Endothelial cell of umbilical vein (primary cell): ENCODE measurements at regions of chr18 and their contacts with region 1.

Region 1: GRCh38 chr18:56650944-56651770 is at the start of gene WDR7:
- DNase-seq: peak; percentile 98
- H3K4me3 ChIP-seq: peak within 1 kb of the TSS; percentile 46 to 73 (median 62)
- H3K27ac ChIP-seq: peak within 1 kb of the TSS; percentile 36
- H3K4me1 ChIP-seq: peaks cover 9% of the 10 kb centered on the region
- H3K27me3 ChIP-seq: no peaks in the 10 kb centered on the region
- CTCF ChIP-seq: no peak
- POLR2A ChIP-seq: no peak
- total RNA-seq, gene WDR7: 19.0 and 19.2 TPM in 2 replicates

Region 2: GRCh38 chr18:56638271-56639093 is 12.7 kb before region 1 on chr18 and contains the start of gene TXNL1:
- CTCF ChIA-PET with region 1: interaction called, 9 read pairs
- POLR2A ChIA-PET with region 1: interaction called, 3 read pairs
- dilution Hi-C with region 1: no loop called
- intact Hi-C with region 1: loop called (anchors 1 kb)
- DNase-seq: peak; percentile 99
- H3K4me3 ChIP-seq: peak within 1 kb of the TSS; percentile 89 to 92 (median 91)
- H3K27ac ChIP-seq: peak within 1 kb of the TSS; percentile 97
- H3K4me1 ChIP-seq: peaks cover 27% of the 10 kb centered on the region
- H3K27me3 ChIP-seq: no peaks in the 10 kb centered on the region
- CTCF ChIP-seq: no peak
- POLR2A ChIP-seq: peak; percentile 93
- total RNA-seq, gene TXNL1: 70.6 and 81.2 TPM in 2 replicates

Region 3: DNA sequence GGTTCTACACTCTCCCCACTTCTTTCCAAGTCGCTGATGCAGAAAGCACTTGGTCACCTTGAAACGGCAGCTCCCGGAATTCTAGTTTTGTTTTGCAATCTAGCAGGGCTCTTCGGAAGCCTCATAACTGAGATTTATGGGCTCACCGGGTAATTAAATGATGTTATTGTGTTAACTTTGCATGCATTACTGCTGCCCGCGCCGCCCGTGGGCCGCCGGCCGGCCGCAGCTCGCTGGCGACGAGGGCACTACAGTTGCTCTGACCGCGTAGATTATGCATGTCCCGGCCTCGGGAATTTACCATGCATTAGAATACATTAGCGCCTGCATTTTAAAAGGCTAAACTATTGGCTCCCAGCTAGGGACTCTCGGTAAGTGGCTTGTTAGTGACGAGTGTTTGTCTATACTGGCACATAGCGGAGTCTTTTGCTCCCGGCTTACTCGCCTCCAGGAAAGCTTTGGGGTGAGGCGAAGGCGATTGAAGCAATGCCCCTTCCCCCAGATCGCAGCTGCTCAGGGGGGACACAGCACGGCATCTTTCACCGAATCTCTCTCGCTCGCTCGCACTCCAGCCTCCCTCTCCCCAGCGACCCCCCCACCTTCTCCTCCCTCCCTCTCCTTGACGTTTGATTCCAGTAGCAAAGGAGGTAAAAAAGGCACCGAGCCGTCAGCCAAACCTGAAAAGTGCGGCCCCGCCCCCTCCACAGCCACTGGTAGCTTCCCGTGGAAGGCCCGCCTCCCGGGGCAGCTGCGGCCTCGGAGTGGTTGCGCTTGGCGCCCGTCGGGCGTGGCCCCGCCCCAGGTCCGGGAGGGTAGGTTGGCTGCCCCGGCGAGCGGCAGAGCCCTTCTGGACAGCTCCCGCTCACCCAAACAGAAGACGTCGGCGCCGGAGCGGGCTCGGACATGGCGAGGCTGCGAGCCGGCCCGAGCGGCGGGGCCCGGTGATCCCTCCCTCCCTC is 783.7 kb after region 1 on chr18 and contains the start of gene ONECUT2:
- CTCF ChIA-PET with region 1: no interaction called
- POLR2A ChIA-PET with region 1: no interaction called
- dilution Hi-C with region 1: no loop called
- intact Hi-C with region 1: no loop called
- DNase-seq: peak; percentile 91
- H3K4me3 ChIP-seq: peak within 1 kb of the TSS; percentile 31 to 58 (median 46)
- H3K27ac ChIP-seq: no peak within 1 kb of the TSS
- H3K4me1 ChIP-seq: peaks cover 18% of the 10 kb centered on the region
- H3K27me3 ChIP-seq: peaks cover 87 to 92% of the 10 kb centered on the region in 2 experiments
- CTCF ChIP-seq: no peak
- POLR2A ChIP-seq: no peak
- total RNA-seq, gene ONECUT2: 0.05 and 0.62 TPM in 2 replicates